Natural killer cell (primary cell): ENCODE measurements at regions of chr12 and their contacts with region 1.

Region 1: DNA sequence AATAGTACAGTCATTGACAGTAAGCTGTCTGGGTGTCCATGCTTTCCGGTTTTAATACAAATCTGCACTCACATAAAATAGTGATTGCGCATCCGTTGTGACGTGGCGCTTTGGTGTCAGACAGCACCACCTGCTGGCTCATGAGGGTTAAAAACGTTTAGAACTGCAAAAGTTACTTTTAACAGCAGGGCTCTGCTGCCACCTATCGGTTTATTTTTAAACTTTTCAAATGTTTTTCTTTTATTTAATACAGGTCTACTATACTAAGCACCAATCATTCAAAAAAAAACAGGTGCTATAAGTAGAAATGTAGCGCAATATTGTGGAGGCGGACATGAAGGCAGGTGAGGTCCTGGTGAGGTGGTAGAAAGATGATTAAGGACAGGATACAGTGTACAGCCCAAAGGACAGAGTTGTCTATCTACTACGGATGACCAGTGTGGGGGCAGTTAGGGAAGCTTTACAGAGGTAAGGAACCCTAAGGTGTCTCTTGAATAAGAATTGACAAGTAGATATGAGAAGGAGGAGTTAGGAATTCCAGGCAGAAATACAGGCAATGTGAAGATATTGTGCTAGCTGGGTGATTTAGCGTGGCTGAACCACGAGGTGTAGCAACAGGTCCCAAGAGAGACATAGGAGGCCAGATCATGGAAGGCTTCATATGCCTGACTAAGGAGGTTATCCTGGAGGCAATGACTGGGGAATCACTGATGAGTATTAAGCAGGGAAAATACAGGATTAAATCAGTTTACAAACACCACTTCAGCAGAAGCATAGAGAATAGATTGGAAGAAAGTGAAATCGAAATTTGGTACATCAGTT is 91.5 kb upstream of the PRB2 start:
- DNase-seq: peak; percentile 72 to 94
- ATAC-seq: peak; percentile 94 to 99 (median 99)
- H3K4me3 ChIP-seq: no peak overlapping the region
- H3K4me3 Mint-ChIP-seq: no peak overlapping the region
- H3K27ac ChIP-seq: no peak overlapping the region
- H3K27ac Mint-ChIP-seq: no peak overlapping the region
- H3K4me1 ChIP-seq: no peaks in the 10 kb centered on the region
- H3K4me1 Mint-ChIP-seq: peaks cover 6 to 10% of the 10 kb centered on the region in 2 donors
- H3K27me3 ChIP-seq: no peaks in the 10 kb centered on the region
- H3K27me3 Mint-ChIP-seq: peaks cover 3 to 34% of the 10 kb centered on the region in 2 donors
- CTCF ChIP-seq: peak; percentile 100

Region 2: GRCh38 chr12:9699898-9700605 is 1786.8 kb before region 1 on chr12:
- intact Hi-C with region 1: no loop called
- DNase-seq: no peak
- ATAC-seq: no peak
- H3K4me3 ChIP-seq: no peak overlapping the region
- H3K4me3 Mint-ChIP-seq: no peak overlapping the region
- H3K27ac ChIP-seq: no peak overlapping the region
- H3K27ac Mint-ChIP-seq: peak overlapping the region; percentile 89 to 92
- H3K4me1 ChIP-seq: peaks cover 16% of the 10 kb centered on the region
- H3K4me1 Mint-ChIP-seq: peaks cover 43 to 55% of the 10 kb centered on the region in 2 donors
- H3K27me3 ChIP-seq: no peaks in the 10 kb centered on the region
- H3K27me3 Mint-ChIP-seq: no peaks in the 10 kb centered on the region
- CTCF ChIP-seq: no peak

Region 3: DNA sequence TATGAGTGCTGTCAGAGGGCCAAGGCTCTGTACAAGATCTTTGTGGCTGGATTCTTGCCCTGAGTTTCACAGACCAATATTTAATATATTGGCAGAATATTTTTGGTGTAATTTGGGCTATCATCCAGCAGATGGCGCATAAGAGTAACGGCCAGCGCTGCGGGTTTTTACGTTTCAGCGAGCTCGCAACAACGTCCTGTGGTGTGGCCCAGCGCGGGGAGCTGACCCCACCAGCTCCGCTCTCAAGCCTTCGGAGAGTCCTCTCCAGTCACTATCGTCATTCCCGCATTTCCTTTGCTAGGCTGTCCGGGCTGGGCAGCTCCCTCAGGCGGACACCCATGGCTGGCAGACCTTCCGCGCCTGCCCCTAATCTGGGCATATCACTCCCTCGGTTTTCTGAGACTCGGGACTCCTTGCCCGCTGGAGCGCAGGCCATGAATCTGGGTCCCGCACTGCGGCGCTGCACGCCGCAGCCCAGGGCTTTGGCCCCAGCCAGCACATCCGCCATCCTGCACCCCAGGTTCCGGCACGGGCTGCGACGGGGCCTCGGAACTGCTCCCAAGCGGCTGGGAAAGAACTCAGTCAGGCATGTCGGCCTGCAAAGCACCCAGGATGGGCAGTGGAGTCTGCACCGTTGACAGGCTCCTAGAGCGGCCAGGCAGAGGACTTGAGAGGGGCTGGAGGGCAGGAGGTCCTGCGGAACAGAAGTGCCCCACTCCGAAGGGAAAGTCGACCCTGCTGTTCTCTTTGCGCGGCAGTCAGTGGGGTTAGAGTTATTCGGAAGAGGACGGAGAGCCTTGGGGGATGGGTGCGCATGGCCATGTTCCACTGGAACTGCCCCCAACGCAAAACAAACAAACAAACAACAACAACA is 1333.3 kb before region 1 on chr12:
- intact Hi-C with region 1: loop called (anchors 2 kb)
- DNase-seq: peak; percentile 61 to 79
- ATAC-seq: peak; percentile 83 to 90 (median 88)
- H3K4me3 ChIP-seq: peak overlapping the region; percentile 64
- H3K4me3 Mint-ChIP-seq: peak overlapping the region; percentile 92
- H3K27ac ChIP-seq: peak overlapping the region; percentile 26
- H3K27ac Mint-ChIP-seq: peak overlapping the region in 1 of 2 donors; percentile 85
- H3K4me1 ChIP-seq: peaks cover 14% of the 10 kb centered on the region
- H3K4me1 Mint-ChIP-seq: peaks cover 15% of the 10 kb centered on the region in 2 donors
- H3K27me3 ChIP-seq: peaks cover 3% of the 10 kb centered on the region
- H3K27me3 Mint-ChIP-seq: peaks cover 7 to 11% of the 10 kb centered on the region in 2 donors
- CTCF ChIP-seq: peak; percentile 86

Region 4: GRCh38 chr12:11228296-11228879 is 258.4 kb before region 1 on chr12:
- intact Hi-C with region 1: loop called (anchors 10 kb)
- DNase-seq: peak in 1 of 2 donors; percentile 25
- ATAC-seq: peak in 2 of 3 donors; percentile 50 to 65
- H3K4me3 ChIP-seq: no peak overlapping the region
- H3K4me3 Mint-ChIP-seq: no peak overlapping the region
- H3K27ac ChIP-seq: no peak overlapping the region
- H3K27ac Mint-ChIP-seq: no peak overlapping the region
- H3K4me1 ChIP-seq: no peaks in the 10 kb centered on the region
- H3K4me1 Mint-ChIP-seq: no peaks in the 10 kb centered on the region
- H3K27me3 ChIP-seq: no peaks in the 10 kb centered on the region
- H3K27me3 Mint-ChIP-seq: no peaks in the 10 kb centered on the region
- CTCF ChIP-seq: no peak